Panc1 (cell line): ENCODE measurements at regions of chr2 and their contacts with region 1.

Region 1: GRCh38 chr2:237695201-237695780 is 67.9 kb downstream of the LRRFIP1 start:
- DNase-seq: peak; percentile 83
- ATAC-seq: peak; percentile 34
- H3K4me3 ChIP-seq: peak overlapping the region; percentile 87 to 93
- H3K27ac ChIP-seq: peak overlapping the region; percentile 96
- H3K4me1 ChIP-seq: peaks cover 70% of the 10 kb centered on the region
- H3K27me3 ChIP-seq: no peaks in the 10 kb centered on the region
- CTCF ChIP-seq: no peak

Region 2: GRCh38 chr2:237682856-237683670 is 12.2 kb before region 1 on chr2:
- CTCF ChIA-PET with region 1: no interaction called
- POLR2A ChIA-PET with region 1: no interaction called
- in situ Hi-C with region 1: no loop called
- intact Hi-C with region 1: no loop called
- DNase-seq: no peak
- ATAC-seq: no peak
- H3K4me3 ChIP-seq: no peak overlapping the region
- H3K27ac ChIP-seq: no peak overlapping the region
- H3K4me1 ChIP-seq: no peaks in the 10 kb centered on the region
- H3K27me3 ChIP-seq: no peaks in the 10 kb centered on the region
- CTCF ChIP-seq: no peak

Region 3: GRCh38 chr2:237731663-237732062 is 36.4 kb after region 1 on chr2:
- CTCF ChIA-PET with region 1: no interaction called
- POLR2A ChIA-PET with region 1: no interaction called
- in situ Hi-C with region 1: no loop called
- intact Hi-C with region 1: loop called (anchors 5 kb)
- DNase-seq: no peak
- ATAC-seq: peak; percentile 72
- H3K4me3 ChIP-seq: peak overlapping the region in 1 of 2 experiments; percentile 42; a peak in 2 of 4 replicates
- H3K27ac ChIP-seq: peak overlapping the region; percentile 90
- H3K4me1 ChIP-seq: peaks cover 68% of the 10 kb centered on the region
- H3K27me3 ChIP-seq: no peaks in the 10 kb centered on the region
- CTCF ChIP-seq: no peak